Naive thymus-derived CD4-positive, alpha-beta T cell (primary cell): ENCODE measurements at regions of chr4 and their contacts with region 1.

Region 1: GRCh38 chr4:39353478-39354253 is 12.5 kb downstream of the RFC1 start:
- DNase-seq: peak in 7 of 9 donors; percentile 39 to 71 (median 63)
- ATAC-seq: peak; percentile 86
- H3K4me3 ChIP-seq: peak overlapping the region; percentile 48
- H3K4me3 Mint-ChIP-seq: peak overlapping the region; percentile 82 to 89 (median 84)
- H3K27ac ChIP-seq: peak overlapping the region; percentile 70
- H3K27ac Mint-ChIP-seq: peak overlapping the region; percentile 88 to 98 (median 95)
- H3K4me1 ChIP-seq: peaks cover 17 to 34% of the 10 kb centered on the region in 2 donors
- H3K4me1 Mint-ChIP-seq: peaks cover 20 to 75% (median 59%) of the 10 kb centered on the region in 7 donors
- H3K27me3 ChIP-seq: no peaks in the 10 kb centered on the region
- H3K27me3 Mint-ChIP-seq: no peaks in the 10 kb centered on the region

Region 2: GRCh38 chr4:39032218-39033085 is 321.2 kb before region 1 on chr4 and contains the start of gene TMEM156:
- CTCF ChIA-PET with region 1: no interaction called
- POLR2A ChIA-PET with region 1: no interaction called
- intact Hi-C with region 1: loop called in 1 of 2 experiments (anchors 1 kb)
- DNase-seq: peak in 7 of 9 donors; percentile 59 to 77 (median 70)
- ATAC-seq: peak; percentile 93
- H3K4me3 ChIP-seq: peak within 1 kb of the TSS; percentile 61
- H3K4me3 Mint-ChIP-seq: peak within 1 kb of the TSS; percentile 65 to 89 (median 82)
- H3K27ac ChIP-seq: peak within 1 kb of the TSS; percentile 55
- H3K27ac Mint-ChIP-seq: peak within 1 kb of the TSS; percentile 19 to 93 (median 87)
- H3K4me1 ChIP-seq: peaks cover 29 to 45% of the 10 kb centered on the region in 2 donors
- H3K4me1 Mint-ChIP-seq: peaks cover 16 to 55% (median 44%) of the 10 kb centered on the region in 7 donors
- H3K27me3 ChIP-seq: no peaks in the 10 kb centered on the region
- H3K27me3 Mint-ChIP-seq: no peaks in the 10 kb centered on the region
- total RNA-seq, gene TMEM156: 8.6 to 36.4 (median 9.4) TPM

Region 3: GRCh38 chr4:39365830-39366771 is 12.4 kb after region 1 on chr4 and contains the start of gene RFC1:
- CTCF ChIA-PET with region 1: interaction called, 3 read pairs
- POLR2A ChIA-PET with region 1: interaction called, 51 read pairs
- intact Hi-C with region 1: loop called (anchors 1 kb)
- DNase-seq: peak; percentile 84 to 92 (median 91)
- ATAC-seq: peak; percentile 98
- H3K4me3 ChIP-seq: peak within 1 kb of the TSS; percentile 69
- H3K4me3 Mint-ChIP-seq: peak within 1 kb of the TSS; percentile 88 to 98 (median 94)
- H3K27ac ChIP-seq: peak within 1 kb of the TSS; percentile 84
- H3K27ac Mint-ChIP-seq: peak within 1 kb of the TSS; percentile 72 to 97 (median 92)
- H3K4me1 ChIP-seq: peaks cover 12 to 19% of the 10 kb centered on the region in 2 donors
- H3K4me1 Mint-ChIP-seq: peaks cover 33 to 59% (median 41%) of the 10 kb centered on the region in 7 donors
- H3K27me3 ChIP-seq: no peaks in the 10 kb centered on the region
- H3K27me3 Mint-ChIP-seq: no peaks in the 10 kb centered on the region
- total RNA-seq, gene RFC1: 62.4 to 66.4 (median 64.3) TPM

Region 4: GRCh38 chr4:39458505-39459300 is 105.0 kb after region 1 on chr4 and contains the starts of genes LIAS and RPL9:
- CTCF ChIA-PET with region 1: no interaction called
- POLR2A ChIA-PET with region 1: no interaction called
- intact Hi-C with region 1: loop called (anchors 2 to 5 kb)
- DNase-seq: peak; percentile 80 to 96 (median 92)
- ATAC-seq: peak; percentile 93
- H3K4me3 ChIP-seq: peak within 1 kb of the TSS; percentile 85
- H3K4me3 Mint-ChIP-seq: peak within 1 kb of the TSS; percentile 92 to 99 (median 96)
- H3K27ac ChIP-seq: peak within 1 kb of the TSS; percentile 95
- H3K27ac Mint-ChIP-seq: peak within 1 kb of the TSS; percentile 98 to 100 (median 99)
- H3K4me1 ChIP-seq: peaks cover 17 to 19% of the 10 kb centered on the region in 2 donors
- H3K4me1 Mint-ChIP-seq: peaks cover 8 to 60% (median 47%) of the 10 kb centered on the region in 7 donors
- H3K27me3 ChIP-seq: no peaks in the 10 kb centered on the region
- H3K27me3 Mint-ChIP-seq: peaks cover 0 to 2% (median 0%) of the 10 kb centered on the region in 5 donors
- total RNA-seq, gene LIAS: 14.5 to 27.8 (median 16.4) TPM
- total RNA-seq, gene RPL9: 1,414 to 3,398 (median 2,567) TPM

Region 5: DNA sequence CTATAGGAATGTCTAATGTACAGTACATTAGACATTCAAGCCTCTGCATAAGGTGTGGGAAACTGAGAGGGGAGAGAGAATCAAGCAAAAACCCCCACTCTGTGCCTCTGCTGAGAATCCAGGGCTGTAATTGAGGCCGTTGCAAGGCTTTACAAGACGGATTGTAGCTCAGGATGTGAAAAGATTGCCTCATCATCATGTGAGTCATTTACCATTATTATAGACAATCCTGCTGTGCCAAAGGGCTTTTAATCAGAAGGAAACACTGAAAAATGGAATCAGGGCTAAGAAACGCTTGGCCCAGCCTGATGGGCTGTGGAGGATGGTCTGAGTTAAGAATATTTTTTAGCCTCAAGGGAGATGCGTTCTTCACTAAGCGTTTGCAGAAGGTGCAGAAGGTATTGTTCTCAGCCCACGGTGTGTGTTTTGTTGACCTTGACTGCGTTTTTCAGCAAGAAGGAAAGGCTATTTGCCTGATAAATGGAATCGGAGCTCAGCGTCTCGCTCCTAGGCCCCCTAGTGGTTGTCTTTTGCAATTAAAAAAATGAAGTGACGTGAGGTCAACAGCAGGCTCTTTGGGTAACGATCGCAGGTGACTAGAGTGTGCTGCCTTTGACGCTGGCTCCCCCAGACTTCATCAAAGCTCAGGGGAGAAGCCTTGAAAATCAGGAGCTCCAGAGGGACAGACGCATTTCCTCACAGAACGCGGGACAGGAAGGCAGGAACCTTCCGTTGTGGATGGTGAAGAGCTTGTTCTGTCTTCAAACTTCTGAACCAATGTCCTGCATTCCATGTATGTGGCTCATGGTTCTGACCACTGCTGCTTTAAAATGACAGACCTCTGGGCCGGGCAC is 963.3 kb after region 1 on chr4:
- CTCF ChIA-PET with region 1: no interaction called
- POLR2A ChIA-PET with region 1: no interaction called
- intact Hi-C with region 1: loop called in 1 of 2 experiments (anchors 10 kb)
- DNase-seq: peak; percentile 39 to 83 (median 76)
- ATAC-seq: peak; percentile 81
- H3K4me3 ChIP-seq: peak overlapping the region; percentile 75
- H3K4me3 Mint-ChIP-seq: peak overlapping the region; percentile 79 to 93 (median 86)
- H3K27ac ChIP-seq: peak overlapping the region; percentile 92
- H3K27ac Mint-ChIP-seq: peak overlapping the region; percentile 90 to 99 (median 99)
- H3K4me1 ChIP-seq: peaks cover 7 to 19% of the 10 kb centered on the region in 2 donors
- H3K4me1 Mint-ChIP-seq: peaks cover 23 to 71% (median 61%) of the 10 kb centered on the region in 7 donors
- H3K27me3 ChIP-seq: no peaks in the 10 kb centered on the region
- H3K27me3 Mint-ChIP-seq: no peaks in the 10 kb centered on the region